Dorsolateral prefrontal cortex (tissue), 120 donors: ENCODE measurements at regions of chr19 and their contacts with region 1.

Region 1: GRCh38 chr19:18683213-18683939 is at the start of gene CRTC1:
- DNase-seq: peak in 9 of 10 donors; percentile 48 to 84 (median 70)
- H3K4me3 ChIP-seq: peak within 1 kb of the TSS; percentile 55 to 88 (median 71)
- H3K27ac ChIP-seq: peak within 1 kb of the TSS in 58 of 59 donors; percentile 69 to 97 (median 91)
- H3K27me3 ChIP-seq: no peaks in the 10 kb centered on the region
- CTCF ChIP-seq: peak in 13 of 56 donors; percentile 6 to 34 (median 16)
- total RNA-seq, gene CRTC1: 35.9 to 127 (median 90.4) TPM

Region 2: DNA sequence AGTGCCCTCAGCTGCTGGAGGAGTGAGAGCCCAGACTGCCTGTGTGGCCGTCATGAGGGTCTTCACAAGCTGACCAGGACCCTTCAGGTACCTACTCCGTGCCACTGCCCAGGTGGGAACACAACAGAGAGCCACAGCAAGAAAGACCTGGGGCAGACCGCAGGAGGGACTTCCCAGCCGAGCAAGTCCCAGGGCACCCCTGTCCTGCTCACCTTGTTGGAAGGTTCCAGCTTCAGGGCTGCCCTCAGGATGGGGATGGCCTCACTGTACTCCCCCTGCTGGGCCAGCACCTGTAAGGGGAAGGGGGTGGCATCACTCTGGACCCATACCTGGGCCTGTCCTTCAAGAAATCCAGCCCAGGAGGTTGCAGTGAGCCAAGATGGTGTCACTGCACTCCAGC is 150.3 kb before region 1 on chr19:
- intact Hi-C with region 1: no loop called
- DNase-seq: no peak
- H3K4me3 ChIP-seq: no peak overlapping the region
- H3K27ac ChIP-seq: no peak overlapping the region
- H3K27me3 ChIP-seq: no peaks in the 10 kb centered on the region
- CTCF ChIP-seq: no peak

Region 3: GRCh38 chr19:18542936-18543815 is 140.2 kb before region 1 on chr19 and contains the start of gene FKBP8:
- intact Hi-C with region 1: no loop called
- DNase-seq: peak; percentile 92 to 98 (median 96)
- H3K4me3 ChIP-seq: peak within 1 kb of the TSS; percentile 41 to 77 (median 63)
- H3K27ac ChIP-seq: peak within 1 kb of the TSS in 57 of 59 donors; percentile 73 to 95 (median 88)
- H3K27me3 ChIP-seq: no peaks in the 10 kb centered on the region
- CTCF ChIP-seq: peak in 1 of 56 donors; percentile 14
- total RNA-seq, gene FKBP8: 391 to 680 (median 539) TPM

Region 4: DNA sequence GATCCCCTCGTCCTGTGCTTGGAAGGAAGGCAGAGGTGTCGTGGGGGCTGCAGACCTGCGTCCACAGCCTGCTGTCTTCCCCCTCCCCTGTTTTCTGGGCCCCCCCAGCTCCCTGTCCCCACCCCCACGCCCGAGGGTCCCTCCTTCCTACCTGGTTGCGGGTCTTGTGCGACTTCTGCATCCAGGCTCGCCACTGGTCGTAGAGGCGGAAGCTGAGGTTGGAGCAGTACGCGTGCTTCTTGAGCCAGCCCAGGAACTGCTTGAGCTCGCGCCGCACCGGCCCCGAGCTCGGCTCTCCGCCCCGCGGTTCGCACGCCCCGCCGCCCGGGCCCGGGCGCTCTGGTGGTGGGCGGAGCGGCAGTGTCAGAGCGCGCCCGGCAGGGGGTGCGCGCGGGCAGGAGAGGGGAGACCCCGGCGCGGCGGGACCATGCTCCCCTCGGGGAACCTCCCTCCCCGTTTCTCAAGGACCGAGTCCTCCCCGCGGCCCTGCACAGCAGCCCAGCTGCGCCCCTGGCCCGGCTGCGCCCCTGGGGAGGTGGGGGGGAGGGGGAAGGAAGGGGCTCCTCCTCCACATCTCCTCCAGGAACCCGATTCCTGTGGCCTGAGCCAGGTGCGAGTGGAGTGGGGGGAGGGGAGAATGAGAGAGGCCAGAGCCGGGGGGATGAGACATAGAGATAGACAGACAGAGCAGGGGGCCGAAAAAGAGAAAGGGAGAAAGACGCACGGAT is 89.1 kb before region 1 on chr19:
- intact Hi-C with region 1: loop called (anchors 5 kb)
- DNase-seq: peak in 6 of 10 donors; percentile 15 to 77 (median 56)
- H3K4me3 ChIP-seq: peak overlapping the region in 58 of 59 donors; percentile 17 to 65 (median 48)
- H3K27ac ChIP-seq: peak overlapping the region in 35 of 59 donors; percentile 2 to 75 (median 51)
- H3K27me3 ChIP-seq: peaks cover 0 to 26% (median 9%) of the 10 kb centered on the region in 45 donors
- CTCF ChIP-seq: peak; percentile 46 to 91 (median 78)

Region 5: DNA sequence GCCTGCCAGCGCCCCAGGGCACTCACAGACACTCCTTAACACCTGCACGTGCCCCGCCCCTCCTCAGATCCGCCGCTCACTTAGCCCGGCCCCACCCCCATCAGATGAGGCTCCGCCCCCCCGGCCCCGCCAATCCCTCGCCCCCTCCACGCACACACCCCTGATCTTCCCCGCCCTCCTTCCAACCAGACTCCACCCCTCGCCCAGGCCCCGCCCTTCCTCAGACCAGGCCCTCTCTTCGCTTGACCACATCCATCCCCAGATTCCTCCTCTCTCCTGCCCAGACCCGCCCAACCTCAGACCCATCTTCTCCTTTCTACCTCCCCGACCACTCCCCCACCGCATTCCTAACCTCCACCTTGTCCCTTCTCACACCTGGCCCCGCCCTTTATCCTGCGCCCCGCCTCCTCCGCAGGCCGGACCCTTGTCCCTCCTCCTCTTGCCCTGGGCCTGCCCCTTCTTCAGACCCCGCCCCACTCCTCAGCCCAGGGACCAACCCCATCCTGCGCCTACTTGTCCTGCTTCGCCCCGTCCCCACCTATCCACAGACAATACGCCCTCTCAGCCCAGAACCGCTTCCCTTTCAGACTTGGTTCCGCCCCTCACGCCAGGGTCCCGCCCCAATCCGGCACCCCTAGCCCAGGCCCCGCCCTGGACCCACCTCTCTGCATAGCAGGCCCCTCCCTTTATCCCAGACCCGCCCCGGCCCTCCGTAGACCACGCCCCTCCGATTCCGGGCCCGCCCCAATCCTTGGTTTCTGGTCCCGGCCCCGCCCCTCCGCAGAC is 47.0 kb before region 1 on chr19:
- intact Hi-C with region 1: loop called (anchors 5 kb)
- DNase-seq: peak; percentile 91 to 99 (median 96)
- H3K4me3 ChIP-seq: peak overlapping the region; percentile 43 to 93 (median 80)
- H3K27ac ChIP-seq: peak overlapping the region in 46 of 59 donors; percentile 18 to 93 (median 81)
- H3K27me3 ChIP-seq: no peaks in the 10 kb centered on the region
- CTCF ChIP-seq: no peak

Region 6: GRCh38 chr19:18831524-18832305 is 148.3 kb after region 1 on chr19 and contains the start of gene UPF1:
- intact Hi-C with region 1: loop called in 1 of 2 experiments (anchors 2 kb)
- DNase-seq: peak; percentile 80 to 95 (median 90)
- H3K4me3 ChIP-seq: peak within 1 kb of the TSS; percentile 41 to 94 (median 84)
- H3K27ac ChIP-seq: peak within 1 kb of the TSS in 46 of 59 donors; percentile 31 to 92 (median 74)
- H3K27me3 ChIP-seq: no peaks in the 10 kb centered on the region
- CTCF ChIP-seq: peak in 27 of 56 donors; percentile 6 to 59 (median 31)
- total RNA-seq, gene UPF1: 53.7 to 101 (median 75.4) TPM

Region 7: DNA sequence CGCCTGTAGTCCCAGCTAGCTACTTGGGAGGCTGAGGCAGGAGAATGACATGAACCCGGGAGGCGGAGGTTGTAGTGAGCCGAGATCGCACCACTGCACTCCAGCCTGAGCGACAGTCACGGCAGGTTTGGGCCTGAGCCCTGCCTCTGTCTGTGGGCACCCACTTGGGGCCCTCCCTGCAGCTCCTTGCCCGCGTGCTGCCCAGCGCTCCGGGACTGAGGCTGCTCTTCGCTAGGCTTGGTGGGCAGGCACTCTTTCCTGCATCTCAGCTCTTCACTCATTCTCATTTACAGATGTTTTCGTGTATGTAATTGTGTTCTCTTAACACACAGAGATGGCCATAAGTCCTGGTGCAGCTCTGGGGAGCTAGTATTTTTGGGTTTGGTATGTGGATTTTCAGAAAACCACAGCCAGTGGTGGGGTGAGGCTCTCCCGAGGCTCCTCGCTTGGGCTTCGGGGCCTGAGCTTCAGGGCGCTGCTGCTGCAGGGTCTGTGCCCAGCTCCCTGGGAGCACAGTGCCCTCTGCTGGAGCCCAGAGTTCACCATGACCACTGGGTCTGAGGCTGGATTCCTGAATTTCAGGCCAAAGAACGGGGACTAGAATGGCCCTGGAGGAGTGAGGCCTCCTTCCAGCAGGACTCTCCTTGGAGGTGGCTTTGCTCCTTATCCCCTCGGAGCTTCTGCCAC is 163.6 kb after region 1 on chr19:
- intact Hi-C with region 1: loop called (anchors 5 kb)
- DNase-seq: peak; percentile 71 to 91 (median 80)
- H3K4me3 ChIP-seq: peak overlapping the region in 8 of 59 donors; percentile 0 to 19 (median 7)
- H3K27ac ChIP-seq: peak overlapping the region in 53 of 59 donors; percentile 28 to 93 (median 79)
- H3K27me3 ChIP-seq: no peaks in the 10 kb centered on the region
- CTCF ChIP-seq: peak; percentile 54 to 93 (median 83)

Region 8: DNA sequence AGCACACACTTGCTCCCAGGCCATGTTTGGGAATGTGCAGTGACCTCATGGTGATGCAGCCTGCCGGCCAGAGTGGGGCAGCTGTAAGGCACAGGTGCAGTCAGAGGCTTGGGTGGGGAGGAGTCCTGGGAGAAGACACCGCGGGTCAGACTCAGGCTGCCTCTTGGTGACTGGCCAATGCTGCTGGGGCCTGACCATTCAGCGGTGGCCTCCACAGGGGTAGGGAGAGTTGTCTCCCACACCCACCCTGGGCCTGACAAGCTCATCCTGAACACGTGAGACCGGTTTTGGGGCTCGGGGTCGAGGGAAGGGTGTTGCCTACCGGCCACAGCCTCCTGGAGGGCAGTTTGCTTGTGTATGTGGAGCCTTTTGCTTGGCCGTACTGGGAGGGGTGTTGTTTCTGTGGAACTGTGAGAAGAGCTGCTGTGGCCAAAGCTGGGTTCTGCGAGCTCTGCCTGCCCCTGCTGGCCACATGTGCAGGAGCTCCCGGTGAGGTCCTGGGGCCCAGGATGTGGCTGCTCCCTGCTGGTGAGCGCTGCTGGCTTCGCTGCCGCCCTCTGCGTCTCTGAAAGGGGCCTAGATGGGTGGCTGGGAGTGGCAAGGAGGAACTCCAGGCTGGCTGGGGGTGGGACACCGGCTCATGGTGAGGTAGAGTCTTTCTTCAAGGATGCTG is 170.5 kb after region 1 on chr19:
- intact Hi-C with region 1: loop called (anchors 5 kb)
- DNase-seq: no peak
- H3K4me3 ChIP-seq: no peak overlapping the region
- H3K27ac ChIP-seq: peak overlapping the region in 11 of 59 donors; percentile 1 to 69 (median 26)
- H3K27me3 ChIP-seq: no peaks in the 10 kb centered on the region
- CTCF ChIP-seq: peak in 1 of 56 donors; percentile 6